Activated B cell treated with CpG ODN at 0.5 μM for 24 hours (primary cell): ENCODE measurements at regions of chr17 and their contacts with region 1.

Region 1: DNA sequence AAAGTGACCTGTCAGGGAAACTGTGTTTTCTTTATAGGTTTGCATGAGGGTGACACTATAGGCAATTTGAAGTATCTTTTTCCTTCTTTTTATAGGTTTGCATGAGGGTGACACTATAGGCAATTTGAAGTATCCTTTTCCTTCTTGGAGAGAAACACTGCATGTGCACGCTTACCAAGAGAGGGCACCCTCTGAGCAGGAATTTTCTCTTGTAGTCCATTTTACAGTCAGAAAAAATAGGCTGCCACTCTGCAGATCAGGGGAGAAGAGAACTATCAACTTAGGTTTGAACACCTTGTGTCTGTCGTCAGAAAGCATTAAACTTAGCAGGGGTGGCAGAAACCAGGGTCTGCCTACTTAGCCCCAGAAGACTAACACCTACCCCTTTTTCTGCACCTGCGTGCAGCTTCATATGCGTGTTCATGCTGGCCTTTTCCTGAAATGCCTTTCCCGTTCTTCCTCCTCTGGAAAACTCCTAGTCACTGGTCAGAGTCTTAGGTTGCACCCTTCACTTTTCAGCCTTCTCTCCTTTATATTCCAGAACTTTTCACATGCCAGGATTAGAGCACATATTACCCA is 16.4 kb upstream of the SMIM36 start:
- DNase-seq: no peak
- ATAC-seq: no peak
- H3K4me3 Mint-ChIP-seq: no peak overlapping the region
- H3K27ac Mint-ChIP-seq: no peak overlapping the region
- H3K4me1 Mint-ChIP-seq: peaks cover 11% of the 10 kb centered on the region
- H3K27me3 Mint-ChIP-seq: no peaks in the 10 kb centered on the region
- CTCF ChIP-seq: no peak

Region 2: DNA sequence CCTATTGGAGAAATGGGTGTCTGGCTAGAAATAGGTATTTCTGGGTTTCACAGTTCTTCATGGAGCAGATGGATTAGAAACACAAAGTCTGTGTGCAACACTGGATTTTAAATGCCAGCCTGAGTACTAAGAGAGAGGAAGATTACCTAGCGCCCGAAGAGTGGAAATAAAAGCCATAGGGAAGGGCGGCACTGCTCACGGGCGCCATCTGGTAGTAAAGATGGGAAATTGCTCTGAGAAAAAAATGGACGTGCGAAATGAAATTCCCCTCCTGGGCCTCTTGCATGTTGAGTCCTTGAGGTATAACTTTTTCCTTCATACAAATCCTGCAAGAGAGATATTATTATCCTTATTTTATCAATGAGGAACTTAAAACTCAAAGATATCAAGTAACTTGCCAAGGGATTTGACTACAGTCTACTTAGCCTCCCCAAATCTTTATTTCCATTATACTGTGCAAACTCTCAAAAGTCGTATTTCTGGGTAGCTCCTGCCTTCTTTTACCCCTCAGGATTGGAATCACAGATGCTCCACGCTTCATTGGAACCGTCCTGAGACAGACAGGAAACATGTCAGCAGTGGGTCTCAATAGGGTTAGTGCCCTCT is 178.8 kb before region 1 on chr17:
- CTCF ChIA-PET with region 1: no interaction called
- POLR2A ChIA-PET with region 1: no interaction called
- intact Hi-C with region 1: no loop called
- DNase-seq: no peak
- ATAC-seq: peak; percentile 37
- H3K4me3 Mint-ChIP-seq: no peak overlapping the region
- H3K27ac Mint-ChIP-seq: no peak overlapping the region
- H3K4me1 Mint-ChIP-seq: peaks cover 3% of the 10 kb centered on the region
- H3K27me3 Mint-ChIP-seq: peaks cover 5% of the 10 kb centered on the region
- CTCF ChIP-seq: peak; percentile 50

Region 3: GRCh38 chr17:55437159-55437605 is 90.4 kb before region 1 on chr17:
- CTCF ChIA-PET with region 1: no interaction called
- POLR2A ChIA-PET with region 1: no interaction called
- intact Hi-C with region 1: no loop called
- DNase-seq: peak; percentile 36
- ATAC-seq: peak; percentile 87
- H3K4me3 Mint-ChIP-seq: peak overlapping the region; percentile 57
- H3K27ac Mint-ChIP-seq: peak overlapping the region; percentile 85
- H3K4me1 Mint-ChIP-seq: peaks cover 51% of the 10 kb centered on the region
- H3K27me3 Mint-ChIP-seq: no peaks in the 10 kb centered on the region
- CTCF ChIP-seq: no peak

Region 4: DNA sequence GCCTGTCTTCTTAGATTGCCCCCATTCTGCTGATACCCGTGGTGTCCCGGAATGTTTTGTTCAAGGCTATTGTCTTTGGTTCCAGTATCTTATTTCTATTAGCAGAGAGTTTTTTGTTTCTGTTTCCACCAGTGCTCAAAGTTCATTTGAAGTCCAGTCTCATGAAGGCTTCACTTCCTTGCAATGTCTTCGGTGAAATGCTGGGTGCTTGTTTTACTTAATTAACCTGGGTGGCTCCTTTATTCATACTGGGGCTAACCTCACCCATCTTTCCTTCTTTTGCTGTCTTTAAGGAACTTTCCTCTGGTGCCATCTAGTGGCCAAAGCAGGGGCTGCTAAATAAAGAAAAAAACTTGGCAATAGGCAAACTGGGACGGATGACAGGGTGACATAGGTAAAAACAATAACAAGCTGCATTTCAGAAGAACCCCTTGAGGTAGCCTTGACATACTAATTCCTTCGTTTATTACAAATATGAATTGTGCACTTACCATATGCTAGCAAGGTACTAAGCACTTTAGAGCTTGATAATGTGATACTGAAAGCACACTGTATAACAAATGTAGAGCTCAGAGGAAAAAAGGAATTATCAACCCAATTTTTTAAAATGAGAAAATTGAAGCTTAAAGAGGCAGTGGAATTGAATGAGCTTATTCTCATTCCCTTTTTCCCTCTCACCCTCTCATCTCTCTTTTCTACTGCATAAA is 13.6 kb before region 1 on chr17:
- CTCF ChIA-PET with region 1: interaction called, 10 read pairs
- POLR2A ChIA-PET with region 1: interaction called, 3 read pairs
- intact Hi-C with region 1: no loop called
- DNase-seq: peak; percentile 54
- ATAC-seq: peak; percentile 69
- H3K4me3 Mint-ChIP-seq: no peak overlapping the region
- H3K27ac Mint-ChIP-seq: no peak overlapping the region
- H3K4me1 Mint-ChIP-seq: peaks cover 4% of the 10 kb centered on the region
- H3K27me3 Mint-ChIP-seq: peaks cover 6% of the 10 kb centered on the region
- CTCF ChIP-seq: no peak

Region 5: DNA sequence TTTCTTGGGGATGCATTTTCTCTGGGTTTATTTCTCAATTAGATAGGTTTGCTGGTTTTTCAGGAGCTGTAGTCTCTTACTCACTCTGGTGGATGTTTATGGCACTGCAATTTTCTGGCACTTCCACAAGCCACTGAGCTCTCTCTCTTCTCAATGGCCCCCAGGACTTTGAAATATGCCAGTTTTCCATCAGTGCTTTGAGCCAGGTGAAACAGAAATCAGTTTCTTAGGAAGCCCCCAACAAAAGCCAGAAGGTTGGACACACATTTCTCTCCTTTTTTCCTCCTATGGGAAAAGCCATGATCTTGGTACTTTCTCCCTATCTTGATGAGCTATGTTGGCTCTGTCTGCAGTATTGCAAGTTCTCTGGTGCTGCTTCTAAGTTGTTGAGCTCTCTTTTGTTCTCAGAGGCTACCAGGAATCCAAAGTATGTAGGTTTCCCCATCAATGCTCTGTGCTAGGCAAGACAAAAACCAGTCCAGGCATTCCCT is 74.3 kb after region 1 on chr17:
- CTCF ChIA-PET with region 1: interaction called, 169 read pairs
- POLR2A ChIA-PET with region 1: interaction called, 7 read pairs
- intact Hi-C with region 1: loop called (anchors 1 kb)
- DNase-seq: no peak
- ATAC-seq: peak; percentile 75
- H3K4me3 Mint-ChIP-seq: no peak overlapping the region
- H3K27ac Mint-ChIP-seq: no peak overlapping the region
- H3K4me1 Mint-ChIP-seq: no peaks in the 10 kb centered on the region
- H3K27me3 Mint-ChIP-seq: peaks cover 4% of the 10 kb centered on the region
- CTCF ChIP-seq: no peak

Region 6: GRCh38 chr17:55717898-55718735 is 190.5 kb after region 1 on chr17:
- CTCF ChIA-PET with region 1: interaction called, 96 read pairs
- POLR2A ChIA-PET with region 1: no interaction called
- intact Hi-C with region 1: loop called (anchors 1 kb)
- DNase-seq: peak; percentile 38
- ATAC-seq: peak; percentile 64
- H3K4me3 Mint-ChIP-seq: no peak overlapping the region
- H3K27ac Mint-ChIP-seq: no peak overlapping the region
- H3K4me1 Mint-ChIP-seq: no peaks in the 10 kb centered on the region
- H3K27me3 Mint-ChIP-seq: peaks cover 16% of the 10 kb centered on the region
- CTCF ChIP-seq: peak; percentile 85

Region 7: GRCh38 chr17:55770148-55770870 is 242.7 kb after region 1 on chr17:
- CTCF ChIA-PET with region 1: interaction called, 50 read pairs
- POLR2A ChIA-PET with region 1: no interaction called
- intact Hi-C with region 1: loop called (anchors 1 kb)
- DNase-seq: no peak
- ATAC-seq: no peak
- H3K4me3 Mint-ChIP-seq: no peak overlapping the region
- H3K27ac Mint-ChIP-seq: no peak overlapping the region
- H3K4me1 Mint-ChIP-seq: no peaks in the 10 kb centered on the region
- H3K27me3 Mint-ChIP-seq: no peaks in the 10 kb centered on the region
- CTCF ChIP-seq: no peak

Region 8: DNA sequence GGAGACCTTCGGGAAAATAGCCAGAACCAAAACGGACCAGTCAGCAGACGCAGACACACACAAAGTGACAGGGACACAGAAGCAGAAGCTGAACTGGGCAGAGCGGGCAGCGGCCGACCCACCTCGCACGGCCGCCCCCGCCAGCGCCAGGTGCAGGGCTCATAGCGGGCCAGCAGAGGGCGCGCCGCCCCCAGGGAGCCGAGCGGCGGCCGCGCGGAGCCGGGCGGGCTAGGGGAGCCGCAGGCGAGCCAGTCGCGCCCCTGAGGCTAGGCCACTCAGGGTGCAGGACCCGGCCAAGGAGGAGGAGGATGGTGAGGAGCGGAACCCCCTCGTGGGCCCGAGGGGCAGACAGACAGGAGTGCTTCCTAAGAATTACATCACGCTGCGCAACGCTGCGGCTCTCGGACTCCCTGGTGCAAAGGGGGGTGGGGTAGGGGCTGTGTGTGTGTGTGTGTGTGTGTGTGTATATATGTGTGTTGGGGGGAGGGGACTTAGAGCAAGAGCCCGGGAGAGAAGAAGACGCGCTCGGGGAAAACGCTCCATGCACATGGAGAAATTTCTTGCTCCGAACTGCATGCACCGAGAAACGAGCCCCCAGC is 1065.0 kb after region 1 on chr17:
- CTCF ChIA-PET with region 1: no interaction called
- POLR2A ChIA-PET with region 1: no interaction called
- intact Hi-C with region 1: loop called (anchors 10 kb)
- DNase-seq: peak; percentile 75
- ATAC-seq: peak; percentile 81
- H3K4me3 Mint-ChIP-seq: peak overlapping the region; percentile 74
- H3K27ac Mint-ChIP-seq: no peak overlapping the region
- H3K4me1 Mint-ChIP-seq: peaks cover 33% of the 10 kb centered on the region
- H3K27me3 Mint-ChIP-seq: peaks cover 49% of the 10 kb centered on the region
- CTCF ChIP-seq: no peak